ENCODE measurements at regions of chr1 and their contacts with region 1.

Region 1: DNA sequence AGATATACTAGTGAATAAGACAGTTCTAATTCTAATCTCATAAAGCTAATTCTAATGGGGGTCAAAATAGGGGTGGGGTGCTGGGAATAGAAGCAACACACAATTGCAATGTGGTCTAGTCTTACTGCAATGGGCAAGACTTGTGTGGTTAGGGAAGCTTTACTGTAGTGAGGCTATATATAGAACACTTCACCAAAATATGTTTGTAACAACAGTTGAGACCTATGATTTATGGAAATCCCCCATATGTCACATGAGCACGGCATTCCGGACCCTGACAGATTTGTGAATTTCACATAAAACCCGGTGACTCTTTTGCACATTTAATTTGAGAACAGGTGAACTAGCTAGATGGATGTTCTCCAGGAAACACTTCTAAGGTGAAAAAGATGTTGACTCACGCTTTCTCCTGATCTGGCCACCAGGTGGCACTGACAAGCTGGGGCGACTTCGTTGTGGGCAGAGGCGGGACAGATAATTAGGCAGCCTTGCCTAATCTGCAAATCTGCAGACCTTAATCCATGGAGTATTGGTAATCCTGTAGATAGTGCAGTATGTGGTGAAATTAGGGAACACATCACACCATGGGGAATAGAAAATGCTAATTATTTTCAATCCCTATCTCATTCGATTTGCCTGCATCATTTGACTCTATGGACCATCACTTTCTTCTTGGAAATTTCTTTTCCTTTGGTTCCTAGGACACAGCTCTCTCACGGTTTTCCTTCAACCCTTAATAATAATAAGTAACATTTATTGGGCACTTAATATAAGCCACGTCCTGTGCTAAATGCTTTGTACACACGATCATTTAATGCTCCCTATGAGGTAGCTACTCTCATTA is 37.7 kb downstream of the KIAA0040 start:
- DNase-seq: peak; percentile 56
- ATAC-seq: peak; percentile 65
- H3K4me3 ChIP-seq: no peak overlapping the region
- H3K27ac ChIP-seq: no peak overlapping the region
- H3K4me1 ChIP-seq: peaks cover 0 to 15% of the 10 kb centered on the region in 2 experiments; a peak in 2 of 4 replicates
- H3K27me3 ChIP-seq: peaks cover 9% of the 10 kb centered on the region
- CTCF ChIP-seq: peak; percentile 83 to 95 (median 93)
- POLR2A ChIP-seq: no peak
- RAD21 ChIP-seq: peak; percentile 97

Region 2: DNA sequence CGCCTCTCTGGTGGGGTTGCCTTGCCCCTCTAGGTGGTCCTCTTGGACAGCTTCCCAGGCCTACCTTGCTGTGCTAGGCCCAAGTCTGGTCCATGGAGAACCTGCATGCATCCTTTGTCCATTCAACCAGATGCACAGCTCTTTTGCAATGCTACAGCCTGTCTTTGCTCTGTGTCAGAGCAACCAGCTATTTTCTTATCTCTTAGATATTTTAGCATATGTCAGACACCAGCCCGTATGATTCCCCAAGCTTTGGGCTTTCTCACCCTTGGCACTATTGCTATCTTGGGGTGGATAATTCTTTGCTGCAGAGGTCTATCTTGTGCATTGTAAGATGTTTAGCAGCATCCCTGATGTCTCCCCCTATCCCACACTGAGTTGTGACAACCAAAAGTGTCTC is 54.9 kb before region 1 on chr1:
- CTCF ChIA-PET with region 1: no interaction called
- POLR2A ChIA-PET with region 1: no interaction called
- RAD21 ChIA-PET with region 1: no interaction called
- intact Hi-C with region 1: no loop called
- DNase-seq: no peak
- ATAC-seq: no peak
- H3K4me3 ChIP-seq: no peak overlapping the region
- H3K27ac ChIP-seq: no peak overlapping the region
- H3K4me1 ChIP-seq: peaks cover 0 to 7% of the 10 kb centered on the region in 2 experiments; a peak in 2 of 4 replicates
- H3K27me3 ChIP-seq: no peaks in the 10 kb centered on the region
- CTCF ChIP-seq: no peak
- POLR2A ChIP-seq: no peak
- RAD21 ChIP-seq: no peak

Region 3: GRCh38 chr1:175169305-175170018 is 14.6 kb after region 1 on chr1:
- CTCF ChIA-PET with region 1: interaction called, 12 read pairs
- POLR2A ChIA-PET with region 1: interaction called, 4 read pairs
- RAD21 ChIA-PET with region 1: interaction called in 1 of 2 experiments, 3 read pairs
- intact Hi-C with region 1: no loop called
- DNase-seq: peak; percentile 81
- ATAC-seq: peak; percentile 80
- H3K4me3 ChIP-seq: peak overlapping the region in 1 of 2 experiments; percentile 38; a peak in 2 of 4 replicates
- H3K27ac ChIP-seq: peak overlapping the region; percentile 89
- H3K4me1 ChIP-seq: peaks cover 44 to 61% of the 10 kb centered on the region in 2 experiments
- H3K27me3 ChIP-seq: no peaks in the 10 kb centered on the region
- CTCF ChIP-seq: no peak
- POLR2A ChIP-seq: no peak
- RAD21 ChIP-seq: peak; percentile 30

Region 4: DNA sequence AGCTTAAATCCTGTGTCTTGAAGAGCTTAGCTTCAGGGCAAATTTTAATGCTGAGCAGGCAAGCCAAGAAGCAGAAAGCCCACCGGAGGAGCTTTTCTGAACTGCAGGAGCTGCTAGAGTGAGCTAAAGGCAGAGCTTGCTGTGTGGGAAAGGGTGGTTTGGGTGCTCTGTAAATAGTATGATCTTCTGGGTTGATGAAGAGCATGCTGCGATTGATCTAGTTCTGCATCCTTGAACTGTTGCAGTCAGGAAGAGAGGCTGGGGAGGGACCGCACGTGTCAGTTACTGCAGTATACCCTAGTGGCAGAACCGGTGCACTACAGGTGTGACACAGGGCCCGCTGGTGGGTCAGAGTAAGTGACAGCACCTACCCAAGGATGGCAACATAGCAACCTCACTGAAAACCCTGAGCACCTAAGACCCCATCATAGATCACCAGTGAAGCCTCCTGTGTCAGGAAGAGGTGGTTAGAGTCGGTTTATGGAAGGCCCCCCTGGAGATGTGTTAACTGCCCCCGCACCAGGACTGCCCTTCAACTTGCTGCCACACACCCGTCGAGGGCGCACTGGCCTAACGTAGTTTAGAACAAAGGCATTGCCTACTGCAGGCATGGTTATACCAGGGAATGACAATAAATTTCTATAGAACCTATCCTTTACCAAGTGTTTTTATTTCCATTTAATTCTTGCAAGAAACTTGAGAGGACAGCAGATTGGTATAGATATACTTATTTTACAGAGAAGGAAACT is 183.7 kb after region 1 on chr1:
- CTCF ChIA-PET with region 1: interaction called, 11 read pairs
- POLR2A ChIA-PET with region 1: no interaction called
- RAD21 ChIA-PET with region 1: interaction called in 1 of 2 experiments, 5 read pairs
- intact Hi-C with region 1: loop called (anchors 5 kb)
- DNase-seq: peak; percentile 42
- ATAC-seq: peak; percentile 99
- H3K4me3 ChIP-seq: no peak overlapping the region
- H3K27ac ChIP-seq: no peak overlapping the region
- H3K4me1 ChIP-seq: no peaks in the 10 kb centered on the region
- H3K27me3 ChIP-seq: peaks cover 34% of the 10 kb centered on the region
- CTCF ChIP-seq: peak; percentile 51 to 82 (median 79); a peak in 5 of 6 replicates
- POLR2A ChIP-seq: no peak
- RAD21 ChIP-seq: peak; percentile 50; the same call in 1 of the 2 replicates

Region 5: GRCh38 chr1:175481126-175482066 is 326.5 kb after region 1 on chr1:
- CTCF ChIA-PET with region 1: interaction called, 4 read pairs
- POLR2A ChIA-PET with region 1: no interaction called
- RAD21 ChIA-PET with region 1: no interaction called
- intact Hi-C with region 1: loop called (anchors 5 kb)
- DNase-seq: no peak
- ATAC-seq: peak; percentile 67
- H3K4me3 ChIP-seq: no peak overlapping the region
- H3K27ac ChIP-seq: no peak overlapping the region
- H3K4me1 ChIP-seq: no peaks in the 10 kb centered on the region
- H3K27me3 ChIP-seq: peaks cover 69% of the 10 kb centered on the region
- CTCF ChIP-seq: peak; percentile 31 to 60 (median 34); a peak in 4 of 6 replicates
- POLR2A ChIP-seq: no peak
- RAD21 ChIP-seq: peak; percentile 50

Region 6: GRCh38 chr1:176073524-176074157 is 918.8 kb after region 1 on chr1:
- CTCF ChIA-PET with region 1: interaction called, 5 read pairs
- POLR2A ChIA-PET with region 1: no interaction called
- RAD21 ChIA-PET with region 1: no interaction called
- intact Hi-C with region 1: loop called (anchors 2 kb)
- DNase-seq: peak; percentile 52
- ATAC-seq: peak; percentile 85
- H3K4me3 ChIP-seq: no peak overlapping the region
- H3K27ac ChIP-seq: no peak overlapping the region
- H3K4me1 ChIP-seq: no peaks in the 10 kb centered on the region
- H3K27me3 ChIP-seq: no peaks in the 10 kb centered on the region
- CTCF ChIP-seq: peak; percentile 55 to 83 (median 57)
- POLR2A ChIP-seq: no peak
- RAD21 ChIP-seq: peak; percentile 73

Measured in HCT116 (cell line).